Endothelial cell of umbilical vein (primary cell): ENCODE measurements at regions of chrX and their contacts with region 1.

Region 1: GRCh38 chrX:47093248-47093647 is 15.0 kb downstream of the RGN start:
- DNase-seq: peak; percentile 26
- H3K4me3 ChIP-seq: no peak overlapping the region
- H3K27ac ChIP-seq: no peak overlapping the region
- H3K4me1 ChIP-seq: no peaks in the 10 kb centered on the region
- H3K27me3 ChIP-seq: no peaks in the 10 kb centered on the region
- CTCF ChIP-seq: peak in 1 of 2 donors; percentile 7
- POLR2A ChIP-seq: no peak

Region 2: DNA sequence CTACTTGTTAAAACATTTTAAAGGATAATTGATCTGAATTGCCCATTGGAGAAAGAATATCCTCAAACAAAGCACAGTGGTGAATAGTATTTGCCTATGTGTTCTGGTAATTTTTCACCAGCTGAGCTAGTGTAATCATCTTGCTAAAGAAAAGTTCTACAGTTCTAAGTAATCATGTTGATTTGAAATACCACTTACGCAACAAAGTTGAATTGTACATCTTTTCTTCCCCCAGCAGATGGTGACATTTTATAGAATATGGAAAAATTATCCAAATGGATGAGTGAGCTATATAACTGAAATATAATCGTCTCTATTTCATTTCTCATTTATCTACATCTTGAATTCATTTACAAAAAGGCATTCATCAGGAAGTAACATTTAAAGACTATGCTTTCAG is 538.3 kb before region 1 on chrX:
- CTCF ChIA-PET with region 1: interaction called, 7 read pairs
- POLR2A ChIA-PET with region 1: no interaction called
- dilution Hi-C with region 1: no loop called
- intact Hi-C with region 1: loop called (anchors 10 kb)
- DNase-seq: peak; percentile 25
- H3K4me3 ChIP-seq: no peak overlapping the region
- H3K27ac ChIP-seq: no peak overlapping the region
- H3K4me1 ChIP-seq: no peaks in the 10 kb centered on the region
- H3K27me3 ChIP-seq: no peaks in the 10 kb centered on the region
- CTCF ChIP-seq: no peak
- POLR2A ChIP-seq: no peak

Region 3: GRCh38 chrX:46803140-46803539 is 290.1 kb before region 1 on chrX:
- CTCF ChIA-PET with region 1: interaction called, 6 read pairs
- POLR2A ChIA-PET with region 1: no interaction called
- dilution Hi-C with region 1: no loop called
- intact Hi-C with region 1: loop called (anchors 5 kb)
- DNase-seq: no peak
- H3K4me3 ChIP-seq: no peak overlapping the region
- H3K27ac ChIP-seq: no peak overlapping the region
- H3K4me1 ChIP-seq: no peaks in the 10 kb centered on the region
- H3K27me3 ChIP-seq: no peaks in the 10 kb centered on the region
- CTCF ChIP-seq: peak in 1 of 2 donors; percentile 20
- POLR2A ChIP-seq: no peak

Region 4: GRCh38 chrX:46903458-46904242 is 189.6 kb before region 1 on chrX:
- CTCF ChIA-PET with region 1: interaction called, 22 read pairs
- POLR2A ChIA-PET with region 1: no interaction called
- dilution Hi-C with region 1: no loop called
- intact Hi-C with region 1: loop called (anchors 5 kb)
- DNase-seq: peak; percentile 83
- H3K4me3 ChIP-seq: peak overlapping the region in 1 of 3 experiments; percentile 35
- H3K27ac ChIP-seq: peak overlapping the region; percentile 44
- H3K4me1 ChIP-seq: peaks cover 15% of the 10 kb centered on the region
- H3K27me3 ChIP-seq: no peaks in the 10 kb centered on the region
- CTCF ChIP-seq: peak; percentile 50 to 71
- POLR2A ChIP-seq: no peak

Region 5: DNA sequence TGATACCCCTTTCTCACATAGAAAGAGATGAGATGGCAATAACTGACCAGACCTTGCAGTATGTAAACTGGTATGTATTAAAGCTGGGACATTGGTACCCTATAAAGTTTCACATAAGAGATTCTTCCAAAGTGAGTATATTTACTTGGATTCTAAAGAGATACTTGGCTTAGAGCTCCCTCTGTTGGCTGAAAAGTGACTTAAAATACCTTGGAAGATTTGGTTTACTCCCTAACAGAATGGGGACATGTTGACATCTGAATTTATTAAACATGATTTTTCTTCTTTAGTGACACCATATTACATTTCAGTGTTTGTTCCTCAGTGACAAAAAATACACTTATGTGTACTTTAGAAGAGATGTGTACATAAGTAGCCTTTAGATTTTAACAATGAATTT is 62.9 kb before region 1 on chrX:
- CTCF ChIA-PET with region 1: interaction called, 14 read pairs
- POLR2A ChIA-PET with region 1: no interaction called
- dilution Hi-C with region 1: no loop called
- intact Hi-C with region 1: no loop called
- DNase-seq: peak; percentile 69
- H3K4me3 ChIP-seq: no peak overlapping the region
- H3K27ac ChIP-seq: no peak overlapping the region
- H3K4me1 ChIP-seq: no peaks in the 10 kb centered on the region
- H3K27me3 ChIP-seq: no peaks in the 10 kb centered on the region
- CTCF ChIP-seq: peak; percentile 19 to 26
- POLR2A ChIP-seq: no peak